Right ventricle myocardium inferior (tissue), 1 donor: ENCODE measurements at regions of chr17 and their contacts with region 1.

Region 1: GRCh38 chr17:56939901-56940343 is 20.9 kb downstream of the COIL start:
- DNase-seq: no peak
- ATAC-seq: peak; percentile 64

Region 2: DNA sequence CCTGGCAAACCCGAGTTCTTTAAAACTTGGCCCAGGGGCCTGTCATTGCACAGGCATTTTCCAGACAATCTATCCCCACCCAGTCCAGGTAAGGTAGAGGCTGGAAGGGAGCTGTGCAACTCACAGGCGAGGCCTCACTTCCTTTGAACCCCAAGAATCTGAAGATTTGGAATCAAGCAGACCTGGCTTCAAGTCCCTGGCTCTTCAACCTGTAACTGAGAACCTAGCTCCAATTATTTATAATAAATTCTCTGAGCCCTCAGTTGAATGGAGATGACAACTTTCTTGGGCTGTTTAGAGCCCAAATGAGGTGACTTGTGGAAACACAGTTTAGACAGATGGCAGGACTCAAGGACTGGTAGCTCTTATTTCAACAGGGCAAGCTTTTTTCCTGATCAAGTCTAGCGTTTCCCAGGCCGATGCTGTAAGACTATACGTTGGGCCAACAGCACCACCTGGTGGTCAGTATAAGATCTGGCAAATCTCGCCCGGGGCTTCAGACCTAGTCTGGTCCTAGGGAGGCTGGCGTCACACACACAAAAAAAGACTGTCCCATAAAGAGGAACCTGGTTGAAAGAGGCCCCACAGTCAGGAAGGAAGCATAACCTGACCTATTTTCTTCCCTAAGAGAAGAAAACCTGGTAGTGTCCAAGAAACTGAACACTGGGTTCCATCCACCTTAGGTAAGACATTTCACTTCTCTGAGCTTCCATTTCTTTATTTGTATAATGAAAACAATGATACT is 224.1 kb before region 1 on chr17:
- intact Hi-C with region 1: no loop called
- DNase-seq: peak; percentile 76
- ATAC-seq: peak; percentile 90

Region 3: GRCh38 chr17:56819431-56820145 is 120.3 kb before region 1 on chr17:
- intact Hi-C with region 1: loop called (anchors 2 kb)
- DNase-seq: no peak
- ATAC-seq: peak; percentile 65

Region 4: GRCh38 chr17:56891784-56892183 is 48.1 kb before region 1 on chr17:
- intact Hi-C with region 1: loop called (anchors 5 kb)
- DNase-seq: peak; percentile 79
- ATAC-seq: no peak

Region 5: GRCh38 chr17:57021226-57021940 is 81.5 kb after region 1 on chr17:
- intact Hi-C with region 1: no loop called
- DNase-seq: no peak
- ATAC-seq: no peak

Region 6: GRCh38 chr17:57045868-57046704 is 106.2 kb after region 1 on chr17:
- intact Hi-C with region 1: no loop called
- DNase-seq: peak; percentile 64
- ATAC-seq: peak; percentile 44